Activated B cell treated with CpG ODN at 0.5 μM for 24 hours (primary cell): ENCODE measurements at regions of chr22 and their contacts with region 1.

Region 1: GRCh38 chr22:24555157-24556039 is at the start of gene SNRPD3:
- DNase-seq: peak; percentile 94
- ATAC-seq: peak; percentile 83
- H3K4me3 Mint-ChIP-seq: peak within 1 kb of the TSS; percentile 99
- H3K27ac Mint-ChIP-seq: peak within 1 kb of the TSS; percentile 96
- H3K4me1 Mint-ChIP-seq: peaks cover 85% of the 10 kb centered on the region
- H3K27me3 Mint-ChIP-seq: no peaks in the 10 kb centered on the region
- CTCF ChIP-seq: no peak
- total RNA-seq, gene SNRPD3: 96.5 and 98.6 TPM in 2 replicates

Region 2: GRCh38 chr22:24011735-24012068 is 543.7 kb before region 1 on chr22:
- CTCF ChIA-PET with region 1: no interaction called
- POLR2A ChIA-PET with region 1: interaction called, 4 read pairs
- intact Hi-C with region 1: loop called (anchors 5 kb)
- DNase-seq: no peak
- ATAC-seq: no peak
- H3K4me3 Mint-ChIP-seq: peak overlapping the region; percentile 98
- H3K27ac Mint-ChIP-seq: peak overlapping the region; percentile 88
- H3K4me1 Mint-ChIP-seq: peaks cover 23% of the 10 kb centered on the region
- H3K27me3 Mint-ChIP-seq: no peaks in the 10 kb centered on the region
- CTCF ChIP-seq: no peak

Region 3: DNA sequence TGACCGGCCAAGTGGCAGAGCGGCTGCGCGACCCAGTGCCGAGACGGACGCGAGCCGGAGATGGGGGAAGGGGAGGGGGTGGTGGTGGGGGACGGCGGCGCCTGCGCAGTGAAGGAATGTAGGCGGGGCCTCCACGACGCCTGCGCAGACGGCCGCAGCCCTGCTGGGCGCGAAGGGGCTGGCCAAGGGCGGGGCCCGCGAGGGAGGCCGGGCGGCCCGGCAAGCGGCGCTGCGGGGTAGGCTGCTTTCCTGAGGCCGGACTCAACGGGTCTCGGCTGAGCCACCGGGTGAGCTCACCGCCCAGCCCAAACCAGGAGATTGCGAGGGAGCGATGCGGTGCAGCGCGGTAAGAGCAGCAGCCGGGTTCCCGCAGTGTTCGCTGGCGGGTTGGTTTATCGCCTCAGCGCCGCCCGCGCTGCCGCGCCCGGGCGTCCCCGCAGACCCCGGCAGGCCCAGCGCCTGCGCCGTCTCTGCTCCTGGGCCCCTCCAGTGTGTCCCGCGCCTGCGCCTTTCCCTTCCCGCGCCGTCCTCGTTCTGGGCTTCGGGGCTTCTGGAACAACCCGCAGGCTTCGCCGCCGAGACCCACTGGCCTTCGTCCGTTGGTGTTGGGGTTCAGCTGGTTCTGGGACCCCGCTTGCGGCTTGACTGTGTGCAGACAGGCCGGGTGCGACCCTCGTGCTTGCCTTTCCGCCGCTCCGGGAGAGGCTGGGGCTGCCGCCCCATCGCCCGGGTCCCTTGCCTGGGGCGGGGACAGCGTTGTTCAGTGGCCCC is 284.6 kb before region 1 on chr22 and contains the start of gene SPECC1L:
- CTCF ChIA-PET with region 1: no interaction called
- POLR2A ChIA-PET with region 1: interaction called, 4 read pairs
- intact Hi-C with region 1: loop called (anchors 1 kb)
- DNase-seq: peak; percentile 96
- ATAC-seq: peak; percentile 90
- H3K4me3 Mint-ChIP-seq: peak within 1 kb of the TSS; percentile 90
- H3K27ac Mint-ChIP-seq: peak within 1 kb of the TSS; percentile 82
- H3K4me1 Mint-ChIP-seq: peaks cover 45% of the 10 kb centered on the region
- H3K27me3 Mint-ChIP-seq: no peaks in the 10 kb centered on the region
- CTCF ChIP-seq: no peak
- total RNA-seq, gene SPECC1L: 59.0 and 64.5 TPM in 2 replicates

Region 4: GRCh38 chr22:24325105-24325757 is 230.2 kb before region 1 on chr22:
- CTCF ChIA-PET with region 1: no interaction called
- POLR2A ChIA-PET with region 1: no interaction called
- intact Hi-C with region 1: loop called (anchors 1 kb)
- DNase-seq: no peak
- ATAC-seq: peak; percentile 88
- H3K4me3 Mint-ChIP-seq: no peak overlapping the region
- H3K27ac Mint-ChIP-seq: no peak overlapping the region
- H3K4me1 Mint-ChIP-seq: peaks cover 21% of the 10 kb centered on the region
- H3K27me3 Mint-ChIP-seq: no peaks in the 10 kb centered on the region
- CTCF ChIP-seq: peak; percentile 41

Region 5: GRCh38 chr22:24503137-24503842 is 52.1 kb before region 1 on chr22:
- CTCF ChIA-PET with region 1: no interaction called
- POLR2A ChIA-PET with region 1: no interaction called
- intact Hi-C with region 1: loop called (anchors 2 kb)
- DNase-seq: peak; percentile 73
- ATAC-seq: peak; percentile 95
- H3K4me3 Mint-ChIP-seq: no peak overlapping the region
- H3K27ac Mint-ChIP-seq: peak overlapping the region; percentile 32
- H3K4me1 Mint-ChIP-seq: peaks cover 47% of the 10 kb centered on the region
- H3K27me3 Mint-ChIP-seq: no peaks in the 10 kb centered on the region
- CTCF ChIP-seq: peak; percentile 18

Region 6: GRCh38 chr22:24542641-24543040 is 12.8 kb before region 1 on chr22:
- CTCF ChIA-PET with region 1: no interaction called
- POLR2A ChIA-PET with region 1: interaction called, 22 read pairs
- intact Hi-C with region 1: no loop called
- DNase-seq: no peak
- ATAC-seq: no peak
- H3K4me3 Mint-ChIP-seq: no peak overlapping the region
- H3K27ac Mint-ChIP-seq: peak overlapping the region; percentile 69
- H3K4me1 Mint-ChIP-seq: peaks cover 39% of the 10 kb centered on the region
- H3K27me3 Mint-ChIP-seq: no peaks in the 10 kb centered on the region
- CTCF ChIP-seq: no peak